ENCODE measurements at regions of chr5 and their contacts with region 1.

Region 1: DNA sequence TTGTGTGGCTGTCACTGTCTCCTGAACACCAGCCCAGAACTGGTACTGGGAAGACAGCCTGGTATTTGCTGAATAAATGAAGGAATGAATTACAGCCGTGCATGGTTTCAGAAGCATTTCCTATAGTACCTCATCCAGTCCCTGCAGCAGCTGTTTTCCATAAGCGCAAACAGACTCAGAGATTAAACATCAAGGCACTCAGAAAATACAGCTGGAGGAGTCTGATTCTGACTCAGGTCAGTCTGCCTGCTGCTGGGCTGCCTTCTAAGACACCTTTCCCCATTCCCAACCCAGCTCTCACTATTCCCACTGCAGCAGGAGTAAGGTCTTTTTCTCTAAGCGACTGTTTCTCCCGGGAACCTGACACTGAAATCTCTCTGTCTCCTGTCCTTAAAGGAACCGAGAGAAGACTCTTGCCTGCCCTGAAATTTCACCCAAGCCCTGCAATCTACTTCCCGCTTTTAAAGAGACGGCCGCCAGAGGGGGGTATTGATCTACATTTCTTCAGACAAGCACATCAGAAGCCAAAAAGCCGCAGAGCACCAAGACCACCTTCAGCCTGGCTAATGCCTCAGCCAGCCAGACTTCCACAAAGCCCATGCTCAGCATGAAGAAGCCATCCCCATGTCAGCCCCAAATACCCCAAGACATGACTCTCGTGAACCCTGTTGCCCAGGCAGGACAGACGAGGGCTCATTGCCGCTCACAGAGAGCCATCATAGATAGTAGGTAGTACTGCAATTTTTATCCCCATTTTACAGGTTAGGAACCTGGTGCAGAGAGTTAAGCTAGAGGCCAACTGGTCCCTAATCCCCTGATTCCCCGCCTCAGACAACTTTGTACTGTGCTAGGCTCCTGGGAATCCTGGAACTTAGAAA is 5.4 kb upstream of the FOXI1 start:
- DNase-seq: peak; percentile 80
- H3K4me3 ChIP-seq: no peak overlapping the region
- H3K27ac ChIP-seq: no peak overlapping the region
- H3K4me1 ChIP-seq: peaks cover 8 to 42% (median 28%) of the 10 kb centered on the region in 6 donors
- H3K27me3 ChIP-seq: no peaks in the 10 kb centered on the region
- CTCF ChIP-seq: peak; percentile 51 to 82 (median 70)
- POLR2A ChIP-seq: no peak

Region 2: DNA sequence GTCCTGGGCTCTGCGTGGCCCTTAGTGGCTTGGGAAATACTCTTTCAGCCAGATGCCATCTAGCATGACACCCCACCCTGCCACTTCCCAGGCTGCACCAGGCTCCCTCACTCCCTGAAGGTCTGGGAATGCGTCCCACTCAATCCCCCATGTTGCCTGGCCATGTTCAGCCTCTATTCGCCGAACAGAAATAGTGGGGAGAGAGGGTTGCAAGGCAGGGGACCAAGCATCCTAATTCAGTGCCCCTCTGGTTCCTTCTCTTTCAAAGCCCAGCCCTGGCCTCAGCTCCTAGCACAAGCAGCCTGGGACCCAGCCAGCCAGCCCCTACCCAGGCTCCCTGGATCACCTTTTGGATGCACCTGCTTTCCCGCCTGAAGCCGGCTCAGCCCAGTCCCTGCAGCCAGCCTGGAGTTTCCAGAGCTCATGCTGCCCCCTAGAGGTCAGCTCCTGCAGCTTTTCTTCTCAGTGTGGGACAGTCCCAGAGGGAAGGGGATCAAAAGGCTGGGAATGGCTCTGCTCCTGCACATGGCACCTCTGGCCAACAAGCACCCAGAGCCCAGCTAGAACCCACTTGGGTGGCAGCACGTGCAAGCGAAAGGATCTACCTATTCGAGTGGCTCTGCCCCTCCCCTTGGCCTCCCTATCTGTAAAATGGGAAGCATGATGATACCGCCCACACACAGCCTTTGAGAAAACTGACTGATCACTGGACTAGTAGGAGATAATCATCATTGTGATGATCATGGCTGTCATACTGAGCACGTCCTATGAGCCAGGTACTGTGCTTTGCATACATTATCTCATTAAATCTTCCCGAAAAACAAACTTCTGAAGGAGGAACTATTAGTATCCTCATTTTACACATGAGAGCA is 83.7 kb after region 1 on chr5:
- intact Hi-C with region 1: loop called (anchors 2 kb)
- DNase-seq: peak; percentile 83
- H3K4me3 ChIP-seq: no peak overlapping the region
- H3K27ac ChIP-seq: no peak overlapping the region
- H3K4me1 ChIP-seq: peaks cover 0 to 3% (median 0%) of the 10 kb centered on the region in 6 donors
- H3K27me3 ChIP-seq: peaks cover 0 to 11% (median 0%) of the 10 kb centered on the region in 7 donors
- CTCF ChIP-seq: peak in 10 of 11 experiments; percentile 37 to 84 (median 67)
- POLR2A ChIP-seq: no peak

Measured in spleen (tissue), 13 donors.